T-cell (primary cell): ENCODE measurements at regions of chr17 and their contacts with region 1.

Region 1: GRCh38 chr17:64129764-64130558 is at the start of gene ERN1:
- DNase-seq: peak; percentile 78 to 94 (median 87)
- ATAC-seq: peak; percentile 86 to 90 (median 88)
- H3K4me3 ChIP-seq: peak within 1 kb of the TSS; percentile 79 to 85
- H3K4me3 Mint-ChIP-seq: peak within 1 kb of the TSS; percentile 88 to 94 (median 93)
- H3K27ac ChIP-seq: peak within 1 kb of the TSS; percentile 95
- H3K27ac Mint-ChIP-seq: peak within 1 kb of the TSS; percentile 94 to 95
- H3K4me1 ChIP-seq: peaks cover 17 to 34% of the 10 kb centered on the region in 2 experiments
- H3K4me1 Mint-ChIP-seq: peaks cover 44 to 57% (median 49%) of the 10 kb centered on the region in 3 donors
- H3K27me3 ChIP-seq: no peaks in the 10 kb centered on the region
- H3K27me3 Mint-ChIP-seq: no peaks in the 10 kb centered on the region
- total RNA-seq, gene ERN1: 71.2 to 146 (median 112) TPM

Region 2: GRCh38 chr17:63911657-63912426 is 218.1 kb before region 1 on chr17:
- CTCF ChIA-PET with region 1: interaction called in 1 of 2 experiments, 11 read pairs
- POLR2A ChIA-PET with region 1: no interaction called
- DNase-seq: peak in 34 of 35 experiments; percentile 12 to 79 (median 50)
- ATAC-seq: peak; percentile 67 to 78 (median 73)
- H3K4me3 ChIP-seq: no peak overlapping the region
- H3K4me3 Mint-ChIP-seq: no peak overlapping the region
- H3K27ac ChIP-seq: no peak overlapping the region
- H3K27ac Mint-ChIP-seq: no peak overlapping the region
- H3K4me1 ChIP-seq: peaks cover 0 to 4% of the 10 kb centered on the region in 2 experiments
- H3K4me1 Mint-ChIP-seq: peaks cover 0 to 5% (median 2%) of the 10 kb centered on the region in 3 donors
- H3K27me3 ChIP-seq: peaks cover 0 to 14% of the 10 kb centered on the region in 2 experiments
- H3K27me3 Mint-ChIP-seq: peaks cover 0 to 3% of the 10 kb centered on the region in 2 donors

Region 3: GRCh38 chr17:64020056-64020766 is 109.8 kb before region 1 on chr17 and contains the start of gene ICAM2:
- CTCF ChIA-PET with region 1: interaction called, 3 to 226 read pairs
- POLR2A ChIA-PET with region 1: interaction called, 9 to 17 read pairs
- DNase-seq: peak; percentile 71 to 97 (median 94)
- ATAC-seq: peak; percentile 79 to 86 (median 85)
- H3K4me3 ChIP-seq: peak within 1 kb of the TSS; percentile 92 to 96
- H3K4me3 Mint-ChIP-seq: peak within 1 kb of the TSS; percentile 93 to 100 (median 97)
- H3K27ac ChIP-seq: peak within 1 kb of the TSS; percentile 100
- H3K27ac Mint-ChIP-seq: peak within 1 kb of the TSS; percentile 96 to 100
- H3K4me1 ChIP-seq: peaks cover 50 to 71% of the 10 kb centered on the region in 2 experiments
- H3K4me1 Mint-ChIP-seq: peaks cover 71 to 83% (median 72%) of the 10 kb centered on the region in 3 donors
- H3K27me3 ChIP-seq: no peaks in the 10 kb centered on the region
- H3K27me3 Mint-ChIP-seq: no peaks in the 10 kb centered on the region
- total RNA-seq, gene ICAM2: 69.6 to 132 (median 116) TPM

Region 4: GRCh38 chr17:64051153-64051552 is 78.8 kb before region 1 on chr17:
- CTCF ChIA-PET with region 1: interaction called, 12 to 19 read pairs
- POLR2A ChIA-PET with region 1: interaction called in 1 of 2 experiments, 7 read pairs
- DNase-seq: peak in 18 of 35 experiments; percentile 6 to 72 (median 26)
- ATAC-seq: peak; percentile 99 to 100 (median 100)
- H3K4me3 ChIP-seq: no peak overlapping the region
- H3K4me3 Mint-ChIP-seq: peak overlapping the region; percentile 41 to 52 (median 52)
- H3K27ac ChIP-seq: peak overlapping the region; percentile 78
- H3K27ac Mint-ChIP-seq: peak overlapping the region; percentile 92 to 97
- H3K4me1 ChIP-seq: peaks cover 14 to 41% of the 10 kb centered on the region in 2 experiments
- H3K4me1 Mint-ChIP-seq: peaks cover 31 to 67% (median 38%) of the 10 kb centered on the region in 3 donors
- H3K27me3 ChIP-seq: no peaks in the 10 kb centered on the region
- H3K27me3 Mint-ChIP-seq: no peaks in the 10 kb centered on the region

Region 5: GRCh38 chr17:64081802-64082799 is 47.9 kb before region 1 on chr17:
- CTCF ChIA-PET with region 1: interaction called in 1 of 2 experiments, 10 read pairs
- POLR2A ChIA-PET with region 1: interaction called in 1 of 2 experiments, 3 read pairs
- DNase-seq: peak in 22 of 35 experiments; percentile 6 to 65 (median 22)
- ATAC-seq: peak; percentile 83 to 90 (median 86)
- H3K4me3 ChIP-seq: peak overlapping the region in 1 of 2 donors; percentile 12
- H3K4me3 Mint-ChIP-seq: peak overlapping the region in 2 of 3 donors; percentile 35 to 67
- H3K27ac ChIP-seq: peak overlapping the region; percentile 68
- H3K27ac Mint-ChIP-seq: no peak overlapping the region
- H3K4me1 ChIP-seq: peaks cover 42 to 50% of the 10 kb centered on the region in 2 experiments
- H3K4me1 Mint-ChIP-seq: peaks cover 14 to 31% (median 17%) of the 10 kb centered on the region in 3 donors
- H3K27me3 ChIP-seq: no peaks in the 10 kb centered on the region
- H3K27me3 Mint-ChIP-seq: no peaks in the 10 kb centered on the region